Vagina (tissue), 2 donors: ENCODE measurements at regions of chr2 and their contacts with region 1.

Region 1: GRCh38 chr2:153497938-153498629 is 19.5 kb upstream of the RPRM start:
- DNase-seq: no peak
- H3K4me3 ChIP-seq: no peak overlapping the region
- H3K27ac ChIP-seq: no peak overlapping the region
- H3K4me1 ChIP-seq: no peaks in the 10 kb centered on the region
- H3K27me3 ChIP-seq: no peaks in the 10 kb centered on the region
- CTCF ChIP-seq: no peak
- POLR2A ChIP-seq: no peak

Region 2: GRCh38 chr2:151619337-151619989 is 1878.6 kb before region 1 on chr2:
- intact Hi-C with region 1: loop called (anchors 5 kb)
- DNase-seq: no peak
- H3K4me3 ChIP-seq: peak overlapping the region in 1 of 2 donors; percentile 9
- H3K27ac ChIP-seq: no peak overlapping the region
- H3K4me1 ChIP-seq: peaks cover 11% of the 10 kb centered on the region
- H3K27me3 ChIP-seq: no peaks in the 10 kb centered on the region
- CTCF ChIP-seq: peak in 1 of 3 experiments; percentile 23
- POLR2A ChIP-seq: no peak

Region 3: GRCh38 chr2:153416071-153416470 is 82.0 kb before region 1 on chr2:
- intact Hi-C with region 1: no loop called
- DNase-seq: no peak
- H3K4me3 ChIP-seq: no peak overlapping the region
- H3K27ac ChIP-seq: no peak overlapping the region
- H3K4me1 ChIP-seq: no peaks in the 10 kb centered on the region
- H3K27me3 ChIP-seq: no peaks in the 10 kb centered on the region
- CTCF ChIP-seq: no peak
- POLR2A ChIP-seq: no peak

Region 4: GRCh38 chr2:153470867-153471266 is 27.2 kb before region 1 on chr2:
- intact Hi-C with region 1: no loop called
- DNase-seq: no peak
- H3K4me3 ChIP-seq: no peak overlapping the region
- H3K27ac ChIP-seq: no peak overlapping the region
- H3K4me1 ChIP-seq: no peaks in the 10 kb centered on the region
- H3K27me3 ChIP-seq: no peaks in the 10 kb centered on the region
- CTCF ChIP-seq: no peak
- POLR2A ChIP-seq: no peak

Region 5: DNA sequence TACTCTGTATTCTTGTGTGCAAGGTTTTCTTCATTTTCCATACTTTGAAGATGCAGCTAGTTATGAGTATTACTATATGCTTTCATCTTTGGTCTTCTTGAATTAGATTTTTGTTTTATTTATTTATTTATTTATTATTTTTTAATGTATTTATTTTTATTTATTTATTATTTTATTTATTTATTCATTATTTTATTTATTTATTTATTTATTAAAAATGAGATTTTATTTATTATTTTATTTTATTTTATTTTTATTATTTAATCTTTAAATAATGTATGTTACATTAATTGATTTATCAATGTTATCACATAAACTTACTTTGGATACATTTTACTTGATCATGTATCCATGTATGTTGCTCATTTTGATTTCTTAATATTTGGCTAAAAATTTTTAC is 241.3 kb after region 1 on chr2:
- intact Hi-C with region 1: no loop called
- DNase-seq: no peak
- H3K4me3 ChIP-seq: no peak overlapping the region
- H3K27ac ChIP-seq: no peak overlapping the region
- H3K4me1 ChIP-seq: no peaks in the 10 kb centered on the region
- H3K27me3 ChIP-seq: no peaks in the 10 kb centered on the region
- CTCF ChIP-seq: no peak
- POLR2A ChIP-seq: no peak